Activated CD4-positive, alpha-beta T cell treated with anti-CD3 and anti-CD28 coated beads for 36 hours (primary cell): ENCODE measurements at regions of chr2 and their contacts with region 1.

Region 1: DNA sequence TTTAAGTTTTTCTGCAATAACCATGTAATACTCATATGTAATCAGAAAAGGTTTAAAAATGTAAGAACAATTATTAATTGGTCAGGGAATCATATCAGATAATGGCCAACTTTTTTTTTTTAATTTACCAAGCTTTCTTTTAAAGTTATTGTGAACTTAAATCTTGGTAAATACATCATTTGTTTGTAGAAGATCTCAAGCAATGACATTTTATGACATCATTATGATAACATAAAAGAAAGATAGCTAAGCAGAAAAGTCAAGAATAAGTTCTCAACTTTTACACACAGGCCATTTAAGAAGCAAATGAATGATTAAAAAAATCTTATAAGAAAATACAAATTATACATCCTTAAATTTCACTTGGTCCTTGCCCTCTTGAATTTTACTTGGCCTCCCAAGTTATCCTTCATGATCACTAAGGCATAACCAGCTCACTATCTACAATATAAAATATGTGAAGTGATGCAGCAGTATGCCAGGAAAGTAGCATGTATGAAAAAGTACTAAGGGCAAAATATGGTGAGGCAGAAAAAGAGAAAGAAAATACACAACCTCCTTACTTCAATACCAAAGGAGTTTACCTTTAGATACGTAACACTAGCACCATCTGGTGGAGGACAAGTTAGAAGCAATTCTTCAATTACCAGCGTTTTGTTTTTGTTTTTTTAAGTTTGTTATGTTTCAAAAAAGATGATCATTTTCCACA is 116.6 kb downstream of the SRBD1 start:
- DNase-seq: no peak
- ATAC-seq: no peak
- H3K4me3 Mint-ChIP-seq: no peak overlapping the region
- H3K27ac Mint-ChIP-seq: peak overlapping the region; percentile 38
- H3K4me1 Mint-ChIP-seq: peaks cover 36% of the 10 kb centered on the region
- H3K27me3 Mint-ChIP-seq: no peaks in the 10 kb centered on the region

Region 2: DNA sequence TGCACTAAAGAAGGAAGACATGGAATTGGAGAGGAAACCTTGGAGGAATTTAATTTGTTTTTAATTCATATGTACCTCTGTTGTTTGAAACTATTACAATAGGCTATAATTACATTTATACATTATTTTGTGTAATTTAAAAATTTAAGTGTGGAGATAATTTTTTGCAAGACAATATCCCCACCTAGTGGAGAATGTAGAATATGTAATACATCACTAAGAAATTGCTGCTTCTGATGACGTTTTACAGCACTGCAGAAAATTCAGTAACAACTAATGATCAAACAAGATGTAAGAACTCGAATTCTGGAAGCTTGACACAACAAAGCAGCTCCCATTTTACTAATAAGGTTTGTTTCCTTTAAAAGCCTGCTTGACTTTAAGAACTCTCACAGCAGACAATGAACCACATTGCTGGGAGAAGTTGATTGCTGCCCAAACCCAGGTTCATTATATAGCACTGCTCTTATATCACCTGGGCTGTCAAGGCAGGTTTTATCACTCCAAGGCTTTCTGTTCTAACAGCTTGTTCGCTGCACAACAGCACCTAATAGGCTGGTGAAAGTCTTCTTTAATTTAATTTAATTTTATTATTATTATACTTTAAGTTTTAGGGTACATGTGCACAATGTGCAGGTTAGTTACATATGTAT is 1952.0 kb before region 1 on chr2:
- CTCF ChIA-PET with region 1: no interaction called
- POLR2A ChIA-PET with region 1: interaction called, 13 read pairs
- intact Hi-C with region 1: no loop called
- DNase-seq: no peak
- ATAC-seq: peak; percentile 60
- H3K4me3 Mint-ChIP-seq: no peak overlapping the region
- H3K27ac Mint-ChIP-seq: no peak overlapping the region
- H3K4me1 Mint-ChIP-seq: peaks cover 15% of the 10 kb centered on the region
- H3K27me3 Mint-ChIP-seq: no peaks in the 10 kb centered on the region

Region 3: DNA sequence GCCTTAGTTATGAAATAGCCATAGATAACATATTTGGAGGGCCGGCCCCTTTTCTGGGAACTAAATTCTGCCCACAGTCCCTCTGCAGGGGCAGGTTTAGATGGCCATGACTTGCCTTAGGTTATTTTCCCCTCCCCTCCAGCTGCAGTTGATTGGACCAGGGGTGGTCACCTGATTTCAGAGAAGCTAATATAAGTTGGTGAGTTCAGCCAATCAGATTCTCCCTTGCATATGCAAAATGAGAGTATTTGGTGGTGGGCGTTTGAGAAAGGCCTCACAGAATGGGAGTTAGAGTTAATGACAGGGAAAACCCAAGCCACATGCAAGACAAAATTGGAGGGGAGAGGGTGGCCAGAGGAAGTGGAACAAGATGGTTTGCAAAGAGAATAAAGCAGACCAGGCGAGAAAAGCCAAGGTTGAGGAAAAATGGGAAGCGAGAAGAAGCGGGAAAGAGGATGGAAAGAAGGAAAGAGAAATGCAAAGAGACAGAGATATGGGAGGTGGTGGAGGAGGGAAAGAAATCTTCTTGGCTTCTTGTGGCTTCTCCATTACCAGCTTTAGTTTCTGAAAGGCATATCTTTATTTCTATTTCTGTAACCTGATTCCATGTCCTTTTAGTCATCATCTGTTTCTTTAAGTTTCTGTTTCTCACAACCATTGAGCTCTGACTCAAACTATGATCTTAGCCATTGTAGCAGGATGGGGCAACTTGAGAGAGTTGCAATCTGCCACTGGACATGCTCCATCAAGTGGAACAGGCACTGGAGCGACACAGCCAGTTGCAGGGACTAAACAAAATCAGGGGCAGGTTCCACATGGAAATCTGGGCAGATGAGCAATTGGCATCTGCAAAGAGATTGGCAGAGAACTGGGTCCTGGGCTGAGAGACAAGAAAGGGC is 661.0 kb before region 1 on chr2:
- CTCF ChIA-PET with region 1: no interaction called
- POLR2A ChIA-PET with region 1: no interaction called
- intact Hi-C with region 1: loop called in 1 of 2 experiments (anchors 1 kb)
- DNase-seq: peak; percentile 21
- ATAC-seq: peak; percentile 24
- H3K4me3 Mint-ChIP-seq: no peak overlapping the region
- H3K27ac Mint-ChIP-seq: peak overlapping the region; percentile 78
- H3K4me1 Mint-ChIP-seq: peaks cover 31% of the 10 kb centered on the region
- H3K27me3 Mint-ChIP-seq: peaks cover 11% of the 10 kb centered on the region

Region 4: GRCh38 chr2:44981136-44982108 is 513.0 kb before region 1 on chr2:
- CTCF ChIA-PET with region 1: interaction called, 42 read pairs
- POLR2A ChIA-PET with region 1: interaction called, 14 read pairs
- intact Hi-C with region 1: loop called (anchors 1 kb)
- DNase-seq: peak; percentile 84
- ATAC-seq: peak; percentile 58
- H3K4me3 Mint-ChIP-seq: no peak overlapping the region
- H3K27ac Mint-ChIP-seq: no peak overlapping the region
- H3K4me1 Mint-ChIP-seq: peaks cover 2% of the 10 kb centered on the region
- H3K27me3 Mint-ChIP-seq: peaks cover 14% of the 10 kb centered on the region

Region 5: DNA sequence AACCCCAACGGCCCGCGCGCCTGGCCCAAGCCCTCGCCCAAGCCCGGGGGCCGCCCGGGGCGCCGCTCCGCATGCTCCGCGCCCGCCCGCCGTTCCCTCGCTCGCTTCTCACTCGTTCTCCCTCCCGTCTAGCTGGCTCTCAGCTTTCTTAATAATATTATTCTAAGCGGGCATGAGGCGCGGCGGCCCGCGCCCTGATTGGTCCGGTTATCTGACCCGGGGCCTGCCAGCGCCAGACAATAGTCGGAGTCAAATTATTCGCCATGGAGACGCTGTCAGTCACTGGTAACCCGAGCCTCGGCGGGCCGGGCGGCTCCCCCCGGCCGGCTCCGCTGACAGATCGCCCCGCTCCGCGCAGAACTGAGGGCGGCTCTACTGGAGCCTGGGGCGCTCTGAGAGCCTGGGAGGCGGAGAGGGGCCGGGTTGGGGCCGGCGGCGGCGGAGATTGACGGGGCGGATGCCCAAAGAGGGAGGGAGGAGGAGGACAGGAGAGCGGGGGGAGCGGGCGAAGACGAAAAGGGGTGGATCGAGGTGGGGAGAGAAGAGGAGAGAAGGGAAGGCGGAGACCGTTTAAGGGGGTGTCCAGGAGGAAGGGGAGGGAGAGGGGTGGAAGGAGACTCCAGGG is 485.0 kb before region 1 on chr2 and contains the start of gene SIX2:
- CTCF ChIA-PET with region 1: interaction called, 13 read pairs
- POLR2A ChIA-PET with region 1: interaction called, 4 read pairs
- intact Hi-C with region 1: no loop called
- DNase-seq: peak; percentile 38
- ATAC-seq: peak; percentile 16
- H3K4me3 Mint-ChIP-seq: peak within 1 kb of the TSS; percentile 53
- H3K27ac Mint-ChIP-seq: no peak within 1 kb of the TSS
- H3K4me1 Mint-ChIP-seq: peaks cover 21% of the 10 kb centered on the region
- H3K27me3 Mint-ChIP-seq: peaks cover 67% of the 10 kb centered on the region
- total RNA-seq, gene SIX2: not detected

Region 6: DNA sequence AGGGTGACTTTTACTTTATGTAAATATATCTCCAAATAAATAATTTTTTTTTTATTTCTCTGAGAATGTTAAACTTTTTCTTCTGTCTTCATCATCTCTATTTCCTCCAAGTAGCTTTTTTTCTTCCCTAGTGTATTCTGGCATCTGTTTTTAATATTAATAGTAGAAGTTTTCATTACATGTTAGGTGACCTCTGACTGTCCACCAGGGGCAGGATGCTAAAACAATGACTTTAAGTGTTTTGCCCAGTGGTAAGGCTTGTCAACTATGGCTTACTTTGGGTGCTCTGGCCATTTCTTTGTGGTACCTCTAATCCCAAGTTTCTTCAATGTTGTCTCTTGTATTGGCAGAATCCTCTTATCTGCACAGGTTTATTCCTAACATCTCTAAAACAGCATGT is 10.4 kb before region 1 on chr2:
- CTCF ChIA-PET with region 1: interaction called, 19 read pairs
- POLR2A ChIA-PET with region 1: no interaction called
- intact Hi-C with region 1: no loop called
- DNase-seq: no peak
- ATAC-seq: no peak
- H3K4me3 Mint-ChIP-seq: no peak overlapping the region
- H3K27ac Mint-ChIP-seq: no peak overlapping the region
- H3K4me1 Mint-ChIP-seq: no peaks in the 10 kb centered on the region
- H3K27me3 Mint-ChIP-seq: no peaks in the 10 kb centered on the region

Region 7: GRCh38 chr2:45611020-45611737 is 116.8 kb after region 1 on chr2 and contains the start of gene SRBD1:
- CTCF ChIA-PET with region 1: interaction called, 3 read pairs
- POLR2A ChIA-PET with region 1: no interaction called
- intact Hi-C with region 1: loop called in 1 of 2 experiments (anchors 2 kb)
- DNase-seq: peak; percentile 96
- ATAC-seq: peak; percentile 97
- H3K4me3 Mint-ChIP-seq: peak within 1 kb of the TSS; percentile 93
- H3K27ac Mint-ChIP-seq: peak within 1 kb of the TSS; percentile 94
- H3K4me1 Mint-ChIP-seq: peaks cover 19% of the 10 kb centered on the region
- H3K27me3 Mint-ChIP-seq: no peaks in the 10 kb centered on the region
- total RNA-seq, gene SRBD1: 19.2 to 25.0 TPM

Region 8: GRCh38 chr2:45637440-45637839 is 143.0 kb after region 1 on chr2:
- CTCF ChIA-PET with region 1: no interaction called
- POLR2A ChIA-PET with region 1: no interaction called
- intact Hi-C with region 1: no loop called
- DNase-seq: no peak
- ATAC-seq: peak; percentile 44
- H3K4me3 Mint-ChIP-seq: no peak overlapping the region
- H3K27ac Mint-ChIP-seq: no peak overlapping the region
- H3K4me1 Mint-ChIP-seq: peaks cover 2% of the 10 kb centered on the region
- H3K27me3 Mint-ChIP-seq: peaks cover 24% of the 10 kb centered on the region

Region 9: DNA sequence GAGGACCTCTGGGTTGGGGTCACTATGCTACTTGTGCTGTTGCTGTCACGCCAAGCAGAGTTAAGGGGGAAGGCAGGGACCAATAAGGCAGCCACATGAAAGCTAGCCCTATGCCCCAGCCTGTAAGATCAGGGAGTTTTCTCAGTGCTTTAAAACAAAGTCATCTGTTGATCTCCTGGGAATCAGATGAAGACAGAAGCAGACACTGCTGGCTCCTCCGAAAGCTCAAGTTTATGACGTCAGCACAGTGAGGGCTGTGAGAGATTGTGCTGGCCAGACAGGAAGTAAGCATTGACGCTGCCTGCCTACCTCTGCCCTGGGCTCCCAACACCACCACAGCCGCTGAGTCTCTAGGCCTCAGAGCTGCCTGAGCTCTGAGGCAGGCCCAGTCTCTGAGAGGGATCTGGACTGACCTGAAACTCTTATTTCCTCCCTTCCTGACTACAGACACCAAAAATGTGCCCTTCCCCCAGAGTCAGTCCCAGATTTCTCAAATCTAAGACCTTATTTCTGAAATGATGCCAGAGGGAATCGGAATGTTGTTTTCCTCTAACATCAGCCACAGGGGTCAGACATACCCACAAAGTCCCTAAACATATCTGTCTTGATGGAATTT is 684.7 kb after region 1 on chr2:
- CTCF ChIA-PET with region 1: no interaction called
- POLR2A ChIA-PET with region 1: no interaction called
- intact Hi-C with region 1: no loop called
- DNase-seq: peak; percentile 75
- ATAC-seq: peak; percentile 100
- H3K4me3 Mint-ChIP-seq: no peak overlapping the region
- H3K27ac Mint-ChIP-seq: peak overlapping the region; percentile 84
- H3K4me1 Mint-ChIP-seq: peaks cover 13% of the 10 kb centered on the region
- H3K27me3 Mint-ChIP-seq: no peaks in the 10 kb centered on the region